ENCODE measurements at regions of chrX and their contacts with region 1.

Region 1: GRCh38 chrX:153554519-153555167 is 37.2 kb downstream of the ATP2B3 start:
- DNase-seq: peak; percentile 46 to 93
- H3K4me3 ChIP-seq: no peak overlapping the region
- CTCF ChIP-seq: no peak
- POLR2A ChIP-seq: no peak

Region 2: GRCh38 chrX:153667956-153668396 is 113.3 kb after region 1 on chrX:
- intact Hi-C with region 1: loop called (anchors 10 kb)
- DNase-seq: peak; percentile 64 to 96
- H3K4me3 ChIP-seq: no peak overlapping the region
- CTCF ChIP-seq: no peak
- POLR2A ChIP-seq: no peak

Region 3: DNA sequence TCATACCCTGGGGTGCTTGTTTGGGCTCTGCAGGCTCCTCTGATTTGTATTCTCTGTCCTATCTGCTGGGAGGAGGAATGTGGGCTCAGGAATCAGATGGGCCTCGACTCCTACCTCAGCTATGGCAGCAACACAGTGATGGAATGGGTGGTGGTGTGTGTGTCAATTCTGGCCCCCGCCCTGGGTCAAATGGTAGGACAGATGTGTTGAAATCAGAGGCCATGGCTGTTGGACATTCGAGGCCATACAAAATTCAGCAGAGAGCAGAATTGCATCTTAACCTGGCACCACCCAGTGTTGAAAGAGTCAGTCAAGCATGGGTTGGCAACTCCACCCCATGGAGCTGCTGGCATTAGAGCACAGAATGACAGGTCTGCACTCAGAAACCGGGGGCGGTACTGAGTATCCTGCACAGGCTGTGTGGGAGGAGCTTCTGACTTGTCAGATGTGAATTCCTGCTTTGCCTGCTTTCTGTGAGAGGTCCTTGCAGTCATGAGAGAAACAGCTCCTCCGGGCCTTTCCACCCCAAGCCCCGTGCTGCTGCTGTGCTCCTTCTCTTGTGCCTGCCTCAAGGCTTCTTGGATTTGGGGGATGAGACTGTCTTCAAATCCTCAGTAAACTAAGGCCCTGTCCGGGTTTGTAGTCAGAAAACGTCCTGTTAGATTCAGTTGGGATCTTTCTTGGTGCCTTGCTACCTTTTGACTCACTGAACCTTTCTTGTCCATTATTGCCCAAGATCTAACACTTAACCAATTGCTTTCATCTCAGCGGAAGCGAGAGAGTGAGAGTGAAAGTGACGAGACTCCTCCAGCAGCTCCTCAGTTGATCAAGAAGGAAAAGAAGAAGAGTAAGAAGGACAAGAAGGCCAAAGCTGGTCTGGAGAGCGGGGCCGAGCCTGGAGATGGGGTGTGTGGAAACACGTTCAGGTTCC is 1221.0 kb after region 1 on chrX:
- intact Hi-C with region 1: no loop called
- DNase-seq: no peak
- H3K4me3 ChIP-seq: no peak overlapping the region
- CTCF ChIP-seq: no peak
- POLR2A ChIP-seq: no peak

Region 4: GRCh38 chrX:154914052-154914451 is 1359.4 kb after region 1 on chrX:
- intact Hi-C with region 1: loop called (anchors 5 kb)
- DNase-seq: no peak
- H3K4me3 ChIP-seq: no peak overlapping the region
- CTCF ChIP-seq: no peak
- POLR2A ChIP-seq: no peak